Sciatic nerve (tissue), 2 donors: ENCODE measurements at regions of chr13 and their contacts with region 1.

Region 1: DNA sequence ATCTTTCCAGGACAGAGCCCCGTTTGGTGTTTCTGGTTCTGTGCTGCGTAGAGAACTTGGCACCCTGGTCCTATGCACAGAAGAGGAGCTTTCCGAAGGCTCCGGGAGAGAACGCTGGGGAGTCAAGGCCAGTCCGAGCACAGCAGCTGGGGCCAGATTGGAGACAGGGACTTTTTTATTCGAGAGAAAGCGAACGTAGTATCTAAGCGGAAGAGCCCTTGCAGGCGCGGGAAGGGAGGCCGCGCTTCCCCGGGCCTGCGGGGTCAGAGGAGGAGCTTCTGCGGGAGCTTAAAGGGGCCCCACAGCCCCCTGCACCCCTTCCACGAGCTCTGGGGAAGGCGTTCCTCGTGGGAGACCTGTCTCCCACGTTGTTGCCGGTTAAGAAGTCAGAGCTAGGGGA is 48.6 kb upstream of the ARHGEF7 start:
- DNase-seq: no peak
- ATAC-seq: peak; percentile 33

Region 2: GRCh38 chr13:110575322-110576069 is 491.0 kb before region 1 on chr13:
- intact Hi-C with region 1: no loop called
- DNase-seq: peak; percentile 58
- ATAC-seq: peak; percentile 61

Region 3: DNA sequence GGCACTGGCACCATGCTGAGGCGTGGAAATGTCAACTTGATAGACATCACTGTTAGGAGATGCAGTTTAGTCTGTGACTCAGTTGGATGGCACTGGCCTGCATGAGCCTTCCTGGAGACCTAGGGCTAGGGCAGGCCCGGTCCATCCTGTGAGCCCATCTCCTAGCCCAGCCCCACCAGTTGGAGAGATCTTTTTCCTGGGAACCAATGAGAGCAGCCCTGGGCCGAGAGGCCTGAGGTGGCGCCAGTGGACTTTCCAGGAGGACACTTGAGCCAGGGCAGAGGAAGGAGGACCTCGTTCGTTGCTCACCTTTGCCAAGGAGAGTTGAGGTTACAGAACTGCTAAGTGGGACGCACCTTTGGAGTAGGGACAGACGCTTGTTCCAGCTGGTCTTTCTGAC is 153.4 kb after region 1 on chr13:
- intact Hi-C with region 1: loop called (anchors 5 kb)
- DNase-seq: no peak
- ATAC-seq: no peak

Region 4: DNA sequence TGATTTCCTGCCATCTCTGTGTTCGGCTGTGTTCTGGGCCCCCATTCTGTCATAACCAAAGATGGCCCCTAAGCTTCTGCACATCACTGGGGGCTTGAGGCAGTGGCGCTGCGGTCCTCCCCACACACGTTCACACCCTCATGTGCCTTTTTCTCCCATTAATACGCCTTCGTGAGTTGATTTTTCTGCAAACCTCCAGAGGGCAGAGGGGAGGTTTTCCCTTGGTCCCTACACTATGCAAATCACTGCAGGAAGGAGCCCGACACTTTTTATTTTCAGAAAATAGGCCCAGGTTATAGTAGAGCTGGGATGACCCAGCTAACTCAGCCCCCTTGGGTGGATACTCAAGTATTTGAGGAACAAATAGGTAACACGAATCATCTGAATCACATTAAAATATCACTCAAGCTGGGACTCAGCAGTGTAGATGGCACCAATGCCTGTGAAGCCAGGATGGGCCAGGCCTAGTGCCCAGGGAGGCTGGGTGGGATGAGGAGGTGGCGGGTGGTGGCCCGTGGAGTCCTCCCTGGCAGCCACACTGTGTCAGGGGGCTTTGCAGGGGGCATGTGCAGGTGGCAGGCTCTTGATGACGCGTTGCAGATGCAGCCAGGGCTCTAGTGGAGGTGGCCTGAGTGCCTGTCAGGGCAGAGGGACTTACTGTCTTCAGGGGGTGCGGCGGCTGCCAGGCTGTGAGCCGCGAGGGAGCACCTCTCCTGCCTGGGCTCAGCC is 488.2 kb after region 1 on chr13:
- intact Hi-C with region 1: no loop called
- DNase-seq: no peak
- ATAC-seq: no peak